ENCODE measurements at regions of chr10 and their contacts with region 1.

Region 1: DNA sequence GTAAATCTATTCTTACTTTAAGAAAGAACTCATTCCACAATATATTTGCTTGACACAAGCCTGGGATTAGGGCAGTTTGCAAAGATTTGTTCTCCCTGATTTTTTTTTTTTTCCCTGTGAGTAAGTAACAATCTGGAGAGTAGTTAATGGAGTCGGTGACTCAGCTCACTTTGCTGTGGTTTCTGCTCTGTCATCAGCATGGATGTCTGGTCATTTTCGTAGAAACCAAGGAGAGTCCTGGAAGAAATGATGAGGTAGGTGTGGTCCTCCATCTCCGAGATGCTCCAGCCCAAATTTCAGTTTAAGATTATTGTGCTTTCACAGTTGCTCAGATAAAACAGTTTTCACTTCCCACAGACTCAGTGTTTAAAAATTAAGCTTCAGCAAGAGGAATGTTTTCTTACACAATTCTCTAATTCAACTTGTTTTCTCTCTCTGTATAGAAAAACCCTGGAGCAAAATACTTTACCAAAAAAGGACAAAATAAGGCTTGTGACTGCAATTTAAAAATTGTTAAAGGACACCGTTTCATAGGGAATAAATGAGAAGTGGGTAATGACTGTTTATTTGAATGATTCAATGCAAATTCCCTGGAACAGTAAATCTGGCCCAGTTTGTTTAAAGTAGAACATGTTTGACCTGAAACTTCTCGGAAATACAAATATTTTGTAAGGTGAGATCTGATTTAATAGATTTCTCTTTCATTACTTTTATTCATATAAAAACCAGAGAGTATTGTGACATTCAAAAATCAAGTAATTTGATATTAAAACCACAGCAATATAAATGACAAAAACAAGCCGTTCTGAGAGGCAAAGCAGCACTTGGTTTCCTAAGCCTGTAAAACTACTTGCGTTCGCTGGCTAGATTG is 76.5 kb upstream of the PITRM1 start:
- DNase-seq: no peak
- ATAC-seq: peak in 6 of 8 donors; percentile 49 to 86 (median 70)
- H3K4me3 ChIP-seq: no peak overlapping the region
- H3K27ac ChIP-seq: peak overlapping the region in 8 of 10 donors; percentile 23 to 76 (median 54)
- H3K4me1 ChIP-seq: peaks cover 0 to 13% (median 0%) of the 10 kb centered on the region in 9 donors
- H3K27me3 ChIP-seq: peaks cover 0 to 3% (median 0%) of the 10 kb centered on the region in 7 donors
- CTCF ChIP-seq: no peak

Region 2: GRCh38 chr10:3323865-3324498 is 74.9 kb after region 1 on chr10:
- intact Hi-C with region 1: loop called in 1 of 10 experiments (anchors 10 kb)
- DNase-seq: peak in 1 of 2 donors; percentile 11
- ATAC-seq: peak in 6 of 8 donors; percentile 38 to 83 (median 78)
- H3K4me3 ChIP-seq: no peak overlapping the region
- H3K27ac ChIP-seq: no peak overlapping the region
- H3K4me1 ChIP-seq: peaks cover 0 to 10% (median 0%) of the 10 kb centered on the region in 9 donors
- H3K27me3 ChIP-seq: no peaks in the 10 kb centered on the region
- CTCF ChIP-seq: no peak

Region 3: DNA sequence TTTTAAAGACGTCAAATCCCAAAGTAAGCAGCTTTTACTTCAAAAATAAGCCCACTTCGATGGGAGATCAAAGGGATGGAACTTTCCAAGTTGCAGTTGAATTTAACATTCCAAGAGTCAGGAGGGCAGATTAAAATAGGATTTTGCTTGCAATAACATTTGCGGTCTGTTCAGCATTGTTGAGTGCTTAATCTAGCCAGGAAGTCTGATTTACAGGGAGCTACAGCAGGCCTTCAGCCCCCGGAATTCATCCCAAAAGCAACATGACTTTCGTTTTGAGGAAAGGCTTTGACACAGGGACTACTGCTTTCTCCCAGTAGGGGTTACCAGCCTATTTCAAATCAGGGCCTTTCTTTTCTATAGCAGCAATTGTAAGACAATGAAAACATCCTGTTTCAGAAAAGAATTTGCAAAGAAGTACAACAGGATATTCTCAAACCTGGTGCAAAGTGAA is 203.1 kb after region 1 on chr10:
- intact Hi-C with region 1: loop called in 1 of 10 experiments (anchors 10 kb)
- DNase-seq: peak in 1 of 2 donors; percentile 52
- ATAC-seq: peak in 7 of 8 donors; percentile 71 to 92 (median 84)
- H3K4me3 ChIP-seq: peak overlapping the region in 3 of 10 donors; percentile 2 to 20 (median 11)
- H3K27ac ChIP-seq: peak overlapping the region; percentile 10 to 85 (median 76)
- H3K4me1 ChIP-seq: peaks cover 0 to 49% (median 28%) of the 10 kb centered on the region in 9 donors
- H3K27me3 ChIP-seq: no peaks in the 10 kb centered on the region
- CTCF ChIP-seq: peak; percentile 21 to 72 (median 48)

Region 4: DNA sequence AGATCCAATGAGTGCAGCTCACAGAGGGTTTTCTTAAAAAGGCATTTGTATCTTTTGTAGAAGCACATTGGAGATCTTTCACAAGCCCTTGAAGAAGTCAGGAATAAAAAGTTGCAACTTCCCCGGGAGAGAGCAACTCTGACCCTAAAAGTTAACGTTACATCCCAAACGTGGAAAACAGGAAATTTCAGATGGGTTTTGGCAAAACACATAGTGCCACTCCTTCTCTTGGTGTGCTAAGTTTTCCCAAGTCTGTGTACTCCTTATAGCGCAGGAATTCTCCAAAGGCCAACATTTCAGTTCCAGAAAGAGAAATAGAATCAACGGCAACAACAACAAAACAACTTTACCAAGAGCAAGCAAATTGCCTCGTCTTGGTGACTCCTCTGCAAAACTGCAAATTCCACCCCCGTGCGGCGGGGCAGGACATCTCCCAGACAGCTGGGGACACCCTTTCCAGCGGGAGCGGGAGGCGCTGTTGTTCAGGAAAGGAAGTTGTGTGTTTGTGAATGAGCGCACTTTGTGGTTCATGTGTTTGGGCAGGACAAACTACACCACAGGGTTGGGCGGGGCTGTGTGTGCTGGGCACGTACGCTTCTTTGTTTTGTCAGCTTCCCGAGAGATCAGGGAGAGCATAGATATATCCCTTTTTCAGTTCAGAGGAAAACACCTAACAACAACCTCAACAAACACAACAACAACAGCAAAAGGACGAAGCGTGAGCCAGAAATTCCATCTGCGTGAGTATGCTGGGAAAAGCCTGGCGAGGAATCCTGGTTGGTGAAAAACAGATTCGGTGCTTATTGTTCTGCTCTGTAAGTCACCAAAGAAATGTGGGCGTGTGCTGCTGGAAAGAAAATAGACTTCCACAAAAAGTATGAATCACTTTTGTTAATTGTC is 218.2 kb after region 1 on chr10:
- intact Hi-C with region 1: loop called in 2 of 10 experiments (anchors 5 to 10 kb)
- DNase-seq: peak; percentile 81 to 87
- ATAC-seq: peak; percentile 69 to 89 (median 82)
- H3K4me3 ChIP-seq: peak overlapping the region in 6 of 10 donors; percentile 7 to 35 (median 20)
- H3K27ac ChIP-seq: peak overlapping the region; percentile 46 to 94 (median 88)
- H3K4me1 ChIP-seq: peaks cover 0 to 71% (median 59%) of the 10 kb centered on the region in 9 donors
- H3K27me3 ChIP-seq: no peaks in the 10 kb centered on the region
- CTCF ChIP-seq: peak; percentile 24 to 71 (median 53)

Region 5: DNA sequence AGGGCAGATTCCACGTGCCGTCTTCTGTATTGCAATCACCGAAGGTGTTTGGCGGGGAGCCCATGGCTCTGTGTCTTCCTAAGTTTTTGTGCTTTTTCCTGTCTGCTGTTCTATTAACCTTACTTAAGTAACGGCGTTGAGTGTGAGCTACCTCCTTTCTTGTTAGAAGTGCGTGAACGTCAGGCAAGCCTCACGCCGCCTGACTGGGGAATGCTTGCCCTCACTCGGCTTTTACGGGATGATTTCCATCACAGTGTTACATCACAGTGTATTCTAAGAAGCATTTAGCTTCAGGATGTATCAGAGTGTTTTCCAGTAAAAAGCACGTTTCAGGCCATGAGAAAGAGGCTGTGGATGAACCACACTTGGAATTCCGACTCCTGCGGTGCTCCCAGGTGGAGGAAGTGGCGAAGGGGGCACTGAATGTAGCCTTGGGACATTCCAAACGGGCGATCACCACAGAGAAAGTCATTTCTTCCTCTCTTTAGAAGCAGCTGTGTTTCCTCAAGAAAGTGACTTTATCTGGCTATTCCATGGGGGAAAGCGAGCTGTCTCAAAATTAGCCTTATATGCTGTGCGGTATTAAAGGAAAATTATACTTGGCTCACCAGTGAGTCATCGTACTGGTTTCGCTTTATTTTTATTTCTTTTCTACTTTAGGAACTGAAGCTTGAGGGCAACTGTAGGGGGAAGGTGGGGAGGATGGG is 245.2 kb after region 1 on chr10:
- intact Hi-C with region 1: loop called in 1 of 10 experiments (anchors 10 kb)
- DNase-seq: peak in 1 of 2 donors; percentile 43
- ATAC-seq: peak; percentile 55 to 90 (median 81)
- H3K4me3 ChIP-seq: peak overlapping the region in 7 of 10 donors; percentile 20 to 41 (median 36)
- H3K27ac ChIP-seq: peak overlapping the region in 9 of 10 donors; percentile 31 to 81 (median 65)
- H3K4me1 ChIP-seq: peaks cover 0 to 17% (median 5%) of the 10 kb centered on the region in 9 donors
- H3K27me3 ChIP-seq: no peaks in the 10 kb centered on the region
- CTCF ChIP-seq: no peak

Region 6: DNA sequence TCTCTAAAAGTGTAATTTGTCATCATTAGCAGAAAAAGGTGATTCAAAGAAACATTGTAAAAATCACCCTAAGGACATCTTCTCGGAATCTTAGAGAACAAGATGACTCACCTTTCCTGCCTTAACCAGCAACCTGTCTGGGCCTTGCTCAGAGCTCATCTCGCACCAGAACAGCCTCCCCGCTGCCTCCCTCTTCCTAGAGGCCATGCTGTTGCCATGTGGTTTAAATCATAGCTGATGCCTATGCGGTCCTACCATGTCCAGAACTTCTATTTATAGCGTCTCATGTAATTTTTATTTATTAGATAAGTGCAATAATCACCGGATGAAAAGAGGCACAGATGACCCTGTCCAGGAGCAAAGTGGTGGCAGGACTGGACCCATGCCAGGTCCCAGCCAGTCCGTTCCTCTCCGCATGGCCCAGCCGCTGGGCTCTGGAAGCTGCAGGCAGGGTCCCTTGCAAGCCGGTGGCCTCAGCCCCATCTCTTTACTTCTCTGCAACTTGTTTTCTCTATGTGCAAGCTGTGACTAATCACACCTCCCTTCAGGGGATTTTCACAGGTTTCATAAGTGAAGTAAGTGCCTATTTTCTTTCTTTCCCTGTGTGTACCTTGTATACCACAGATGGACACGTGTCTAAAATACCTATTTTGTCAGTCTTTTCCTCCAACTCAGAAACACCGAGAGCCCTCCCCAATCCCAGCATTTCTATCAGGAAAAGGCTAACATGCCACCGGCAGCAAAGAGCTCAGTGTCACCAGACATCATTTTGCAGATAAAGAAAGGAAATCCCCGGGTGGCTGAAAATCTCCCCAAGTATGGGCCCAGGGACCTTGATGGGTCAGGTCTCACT is 508.7 kb after region 1 on chr10:
- intact Hi-C with region 1: loop called in 1 of 10 experiments (anchors 10 kb)
- DNase-seq: no peak
- ATAC-seq: peak in 1 of 8 donors; percentile 38
- H3K4me3 ChIP-seq: no peak overlapping the region
- H3K27ac ChIP-seq: peak overlapping the region in 1 of 10 donors; percentile 66
- H3K4me1 ChIP-seq: peaks cover 4 to 74% (median 22%) of the 10 kb centered on the region in 9 donors
- H3K27me3 ChIP-seq: no peaks in the 10 kb centered on the region
- CTCF ChIP-seq: no peak

Region 7: GRCh38 chr10:3887885-3888476 is 638.9 kb after region 1 on chr10:
- intact Hi-C with region 1: loop called in 1 of 10 experiments (anchors 10 kb)
- DNase-seq: peak in 1 of 2 donors; percentile 42
- ATAC-seq: peak in 6 of 8 donors; percentile 30 to 50 (median 45)
- H3K4me3 ChIP-seq: no peak overlapping the region
- H3K27ac ChIP-seq: peak overlapping the region in 8 of 10 donors; percentile 62 to 86 (median 78)
- H3K4me1 ChIP-seq: peaks cover 0 to 40% (median 25%) of the 10 kb centered on the region in 9 donors
- H3K27me3 ChIP-seq: no peaks in the 10 kb centered on the region
- CTCF ChIP-seq: no peak